ENCODE measurements at regions of chr12 and their contacts with region 1.

Region 1: DNA sequence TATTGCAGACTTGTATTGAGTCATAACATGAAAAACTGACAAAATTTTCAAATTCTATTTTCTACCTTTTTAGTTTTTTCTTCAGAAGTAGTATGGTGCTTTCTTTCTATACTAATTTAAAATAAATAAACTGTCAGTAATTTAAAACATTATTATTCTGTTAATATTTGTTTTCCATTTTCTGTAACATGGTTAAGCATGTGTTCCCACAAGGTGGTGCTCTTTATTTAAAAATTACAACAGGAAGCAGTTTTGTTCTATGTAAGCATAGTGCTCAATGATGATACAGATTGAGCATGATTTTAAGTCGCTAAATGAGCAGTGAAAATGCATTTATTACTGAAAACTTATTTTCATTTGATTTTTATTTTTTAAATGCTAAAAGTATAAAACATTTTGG is 114.6 kb downstream of the PPFIA2 start:
- DNase-seq: peak in 1 of 2 donors; percentile 74
- H3K4me3 ChIP-seq: no peak overlapping the region
- H3K27ac ChIP-seq: no peak overlapping the region
- H3K4me1 ChIP-seq: no peaks in the 10 kb centered on the region
- H3K27me3 ChIP-seq: no peaks in the 10 kb centered on the region
- CTCF ChIP-seq: peak in 4 of 7 experiments; percentile 24 to 60 (median 46)
- EP300 ChIP-seq: no peak
- POLR2A ChIP-seq: no peak

Region 2: DNA sequence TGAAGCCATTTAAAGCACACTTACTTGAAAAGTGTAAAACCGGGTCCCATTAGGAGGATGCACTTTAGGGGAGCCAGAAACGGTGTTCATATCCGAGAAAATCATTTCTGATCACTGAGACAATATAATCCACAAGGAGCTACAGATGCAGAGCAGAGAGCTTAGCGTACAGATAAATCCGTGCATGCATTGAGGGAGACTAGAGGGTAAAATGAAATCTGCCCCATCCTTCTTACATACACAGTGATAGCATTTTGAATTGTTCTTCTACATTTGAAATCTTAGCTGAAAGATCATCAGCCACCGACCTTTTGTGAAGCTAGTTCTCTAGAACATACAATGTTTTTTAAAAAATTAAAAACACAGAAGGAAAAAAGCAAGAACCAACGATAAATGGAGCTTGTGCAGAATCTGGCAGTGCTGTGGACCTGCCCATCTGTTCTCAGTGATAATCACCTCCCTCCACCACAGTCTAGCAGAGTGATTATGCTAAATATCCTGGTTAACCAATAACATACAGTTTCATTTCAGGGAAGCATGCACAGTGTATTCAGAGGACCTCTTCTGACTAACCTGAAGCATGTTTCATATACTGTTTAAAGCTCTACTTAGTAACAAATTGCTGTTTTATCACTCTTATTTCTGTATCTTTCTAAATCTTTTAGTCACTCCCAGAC is 46.4 kb before region 1 on chr12:
- intact Hi-C with region 1: no loop called
- DNase-seq: peak in 1 of 2 donors; percentile 26
- H3K4me3 ChIP-seq: no peak overlapping the region
- H3K27ac ChIP-seq: no peak overlapping the region
- H3K4me1 ChIP-seq: no peaks in the 10 kb centered on the region
- H3K27me3 ChIP-seq: no peaks in the 10 kb centered on the region
- CTCF ChIP-seq: no peak
- EP300 ChIP-seq: no peak
- POLR2A ChIP-seq: no peak

Region 3: DNA sequence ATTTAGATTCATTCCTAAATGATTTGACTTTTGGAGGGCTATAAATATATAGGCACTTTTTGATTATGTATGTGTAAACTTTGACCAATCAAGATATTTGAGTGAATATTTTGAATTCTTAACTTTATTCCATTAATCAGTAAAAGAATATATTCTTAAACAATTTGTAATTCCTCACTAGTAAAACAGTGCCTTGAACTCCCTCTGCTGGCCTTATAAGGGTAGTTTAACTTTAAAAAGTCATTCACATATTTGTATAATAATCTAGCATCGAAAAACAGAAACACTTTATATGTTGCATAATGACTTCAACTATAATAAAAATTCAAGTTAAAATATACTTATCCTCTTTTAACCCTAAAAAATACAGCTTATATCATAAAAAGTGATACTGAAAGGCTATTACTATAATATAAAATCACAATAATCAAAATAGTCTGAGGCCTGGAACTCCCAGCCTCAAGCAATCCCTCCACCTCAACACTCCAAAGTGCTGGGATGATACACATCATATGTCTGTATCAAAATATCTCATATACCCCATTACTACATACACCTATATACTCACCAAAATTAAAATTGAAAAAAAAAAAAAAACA is 682.5 kb after region 1 on chr12:
- intact Hi-C with region 1: loop called (anchors 10 kb)
- DNase-seq: peak in 1 of 2 donors; percentile 40
- H3K4me3 ChIP-seq: no peak overlapping the region
- H3K27ac ChIP-seq: no peak overlapping the region
- H3K4me1 ChIP-seq: no peaks in the 10 kb centered on the region
- H3K27me3 ChIP-seq: no peaks in the 10 kb centered on the region
- CTCF ChIP-seq: peak in 3 of 7 experiments; percentile 27 to 43 (median 36)
- EP300 ChIP-seq: no peak
- POLR2A ChIP-seq: no peak

Measured in stomach (tissue), 19 donors.